ENCODE measurements at regions of chrX and their contacts with region 1.

Region 1: GRCh38 chrX:155841232-155841631 is 39.9 kb upstream of the VAMP7 start:
- H3K4me3 Mint-ChIP-seq: no peak overlapping the region
- H3K27ac Mint-ChIP-seq: peak overlapping the region; percentile 35
- H3K4me1 Mint-ChIP-seq: no peaks in the 10 kb centered on the region
- H3K27me3 Mint-ChIP-seq: no peaks in the 10 kb centered on the region

Region 2: DNA sequence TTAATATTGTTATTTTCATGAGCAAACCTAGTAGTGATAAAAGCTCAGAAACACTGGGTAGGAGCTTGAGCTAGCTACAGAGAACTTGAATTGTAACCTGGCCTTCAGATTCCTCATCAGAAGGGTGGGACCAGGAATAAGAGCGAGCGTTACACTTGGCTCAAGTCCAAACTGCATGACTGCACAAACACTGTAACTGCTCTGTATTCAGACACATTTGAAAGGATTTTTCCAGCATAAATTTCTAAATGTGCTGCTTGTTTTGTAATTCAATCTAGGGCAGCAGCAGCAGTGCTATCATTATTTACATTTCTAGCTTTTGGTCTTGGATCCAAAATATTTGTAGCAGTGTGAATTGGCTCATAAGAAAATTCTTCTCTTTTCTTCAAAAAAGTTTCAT is 95.4 kb before region 1 on chrX:
- intact Hi-C with region 1: no loop called
- H3K4me3 Mint-ChIP-seq: no peak overlapping the region
- H3K27ac Mint-ChIP-seq: no peak overlapping the region
- H3K4me1 Mint-ChIP-seq: no peaks in the 10 kb centered on the region
- H3K27me3 Mint-ChIP-seq: no peaks in the 10 kb centered on the region

Region 3: GRCh38 chrX:155881158-155881993 is 40.1 kb after region 1 on chrX and contains the start of gene VAMP7:
- intact Hi-C with region 1: loop called (anchors 5 kb)
- H3K4me3 Mint-ChIP-seq: peak within 1 kb of the TSS; percentile 92
- H3K27ac Mint-ChIP-seq: peak within 1 kb of the TSS; percentile 87
- H3K4me1 Mint-ChIP-seq: peaks cover 34% of the 10 kb centered on the region
- H3K27me3 Mint-ChIP-seq: no peaks in the 10 kb centered on the region